Activated naive CD4-positive, alpha-beta T cell treated with anti-CD3 and anti-CD28 coated beads, Interleukin-2, amount 10 ng/mL, durations not matched to agents 7 days and 5 days (primary cell): ENCODE measurements at regions of chr14 and their contacts with region 1.

Region 1: GRCh38 chr14:91911474-91912032 is 35.9 kb downstream of the FBLN5 start:
- DNase-seq: peak; percentile 57
- H3K4me3 Mint-ChIP-seq: no peak overlapping the region
- H3K27ac Mint-ChIP-seq: no peak overlapping the region
- H3K4me1 Mint-ChIP-seq: peaks cover 15% of the 10 kb centered on the region
- H3K27me3 Mint-ChIP-seq: peaks cover 8% of the 10 kb centered on the region

Region 2: GRCh38 chr14:91649930-91650329 is 261.6 kb before region 1 on chr14:
- CTCF ChIA-PET with region 1: interaction called, 24 read pairs
- DNase-seq: peak; percentile 24
- H3K4me3 Mint-ChIP-seq: no peak overlapping the region
- H3K27ac Mint-ChIP-seq: no peak overlapping the region
- H3K4me1 Mint-ChIP-seq: peaks cover 15% of the 10 kb centered on the region
- H3K27me3 Mint-ChIP-seq: no peaks in the 10 kb centered on the region

Region 3: DNA sequence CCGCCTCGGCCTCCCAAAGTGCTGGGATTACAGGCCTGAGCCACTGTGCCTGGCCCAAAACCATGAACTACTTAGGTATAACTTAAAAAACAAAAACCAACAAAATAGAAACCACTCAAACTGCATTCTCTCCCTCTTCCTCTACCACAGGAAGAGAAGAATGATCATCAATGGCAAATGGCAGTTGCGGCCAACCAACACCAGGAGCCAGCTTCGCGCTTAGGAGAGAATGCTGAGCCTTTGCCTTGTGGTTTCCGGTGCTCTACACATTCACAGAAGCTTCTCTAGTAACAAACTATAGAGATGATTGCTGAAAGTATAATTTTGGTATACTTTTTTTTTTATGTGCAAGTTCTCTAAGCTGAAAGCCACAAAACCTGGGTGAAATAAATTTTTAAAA is 196.7 kb before region 1 on chr14:
- CTCF ChIA-PET with region 1: interaction called, 28 read pairs
- DNase-seq: peak; percentile 76
- H3K4me3 Mint-ChIP-seq: no peak overlapping the region
- H3K27ac Mint-ChIP-seq: peak overlapping the region; percentile 60
- H3K4me1 Mint-ChIP-seq: peaks cover 13% of the 10 kb centered on the region
- H3K27me3 Mint-ChIP-seq: no peaks in the 10 kb centered on the region

Region 4: DNA sequence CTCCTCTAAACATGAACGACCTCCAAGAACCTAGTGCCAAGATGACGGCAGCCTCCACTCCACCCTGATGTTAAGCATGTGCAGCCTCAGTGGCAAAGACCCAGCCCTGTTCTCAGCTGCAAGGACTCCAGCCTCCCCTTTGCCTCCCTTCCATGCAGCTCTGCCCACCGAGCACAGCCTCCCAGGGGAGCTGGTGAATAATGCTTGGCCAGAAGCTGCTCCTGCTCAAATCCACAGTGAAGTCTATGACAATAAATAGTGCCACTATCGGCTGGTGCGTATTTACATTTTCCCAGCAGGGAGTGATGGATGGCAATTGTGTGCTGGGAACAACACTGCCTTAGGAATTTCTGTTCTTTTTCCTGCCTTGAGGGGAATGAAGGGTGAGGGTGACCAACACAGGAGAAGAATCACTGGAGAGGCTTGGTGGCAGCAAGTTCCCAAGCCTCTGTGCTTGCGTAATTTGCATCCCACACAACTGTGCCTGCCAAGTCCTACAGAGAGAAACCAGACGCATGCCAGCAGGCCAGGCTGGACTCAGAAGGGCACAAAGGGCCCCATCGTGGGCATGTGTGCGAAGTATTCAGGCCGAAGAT is 14.3 kb before region 1 on chr14:
- CTCF ChIA-PET with region 1: interaction called, 14 read pairs
- DNase-seq: no peak
- H3K4me3 Mint-ChIP-seq: no peak overlapping the region
- H3K27ac Mint-ChIP-seq: no peak overlapping the region
- H3K4me1 Mint-ChIP-seq: peaks cover 30% of the 10 kb centered on the region
- H3K27me3 Mint-ChIP-seq: peaks cover 15% of the 10 kb centered on the region

Region 5: GRCh38 chr14:91942128-91942527 is 30.6 kb after region 1 on chr14:
- CTCF ChIA-PET with region 1: no interaction called
- DNase-seq: no peak
- H3K4me3 Mint-ChIP-seq: no peak overlapping the region
- H3K27ac Mint-ChIP-seq: no peak overlapping the region
- H3K4me1 Mint-ChIP-seq: peaks cover 16% of the 10 kb centered on the region
- H3K27me3 Mint-ChIP-seq: peaks cover 32% of the 10 kb centered on the region

Region 6: GRCh38 chr14:91968280-91968679 is 56.7 kb after region 1 on chr14:
- CTCF ChIA-PET with region 1: no interaction called
- DNase-seq: peak; percentile 34
- H3K4me3 Mint-ChIP-seq: no peak overlapping the region
- H3K27ac Mint-ChIP-seq: no peak overlapping the region
- H3K4me1 Mint-ChIP-seq: peaks cover 5% of the 10 kb centered on the region
- H3K27me3 Mint-ChIP-seq: no peaks in the 10 kb centered on the region

Region 7: DNA sequence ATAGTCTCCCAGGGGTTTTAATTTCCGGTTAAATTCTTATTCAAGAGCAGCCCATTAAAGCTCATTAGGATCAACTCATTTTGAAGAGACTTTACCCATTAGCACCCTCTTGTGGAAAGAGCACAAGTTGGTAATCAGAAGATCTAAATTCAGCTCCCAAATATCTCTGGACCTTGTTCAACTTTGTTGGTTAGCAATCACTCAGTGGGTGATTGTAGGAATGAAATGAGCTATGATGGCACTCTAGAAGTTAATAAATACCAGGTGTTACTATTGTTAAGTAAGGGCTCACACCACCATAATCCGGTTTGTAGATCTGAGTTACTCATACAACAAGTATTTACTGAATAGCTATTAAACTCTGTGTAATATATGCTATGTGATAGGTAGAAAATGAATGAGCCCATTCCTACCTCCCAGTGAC is 85.4 kb after region 1 on chr14:
- CTCF ChIA-PET with region 1: interaction called, 12 read pairs
- DNase-seq: no peak
- H3K4me3 Mint-ChIP-seq: no peak overlapping the region
- H3K27ac Mint-ChIP-seq: no peak overlapping the region
- H3K4me1 Mint-ChIP-seq: peaks cover 36% of the 10 kb centered on the region
- H3K27me3 Mint-ChIP-seq: no peaks in the 10 kb centered on the region

Region 8: DNA sequence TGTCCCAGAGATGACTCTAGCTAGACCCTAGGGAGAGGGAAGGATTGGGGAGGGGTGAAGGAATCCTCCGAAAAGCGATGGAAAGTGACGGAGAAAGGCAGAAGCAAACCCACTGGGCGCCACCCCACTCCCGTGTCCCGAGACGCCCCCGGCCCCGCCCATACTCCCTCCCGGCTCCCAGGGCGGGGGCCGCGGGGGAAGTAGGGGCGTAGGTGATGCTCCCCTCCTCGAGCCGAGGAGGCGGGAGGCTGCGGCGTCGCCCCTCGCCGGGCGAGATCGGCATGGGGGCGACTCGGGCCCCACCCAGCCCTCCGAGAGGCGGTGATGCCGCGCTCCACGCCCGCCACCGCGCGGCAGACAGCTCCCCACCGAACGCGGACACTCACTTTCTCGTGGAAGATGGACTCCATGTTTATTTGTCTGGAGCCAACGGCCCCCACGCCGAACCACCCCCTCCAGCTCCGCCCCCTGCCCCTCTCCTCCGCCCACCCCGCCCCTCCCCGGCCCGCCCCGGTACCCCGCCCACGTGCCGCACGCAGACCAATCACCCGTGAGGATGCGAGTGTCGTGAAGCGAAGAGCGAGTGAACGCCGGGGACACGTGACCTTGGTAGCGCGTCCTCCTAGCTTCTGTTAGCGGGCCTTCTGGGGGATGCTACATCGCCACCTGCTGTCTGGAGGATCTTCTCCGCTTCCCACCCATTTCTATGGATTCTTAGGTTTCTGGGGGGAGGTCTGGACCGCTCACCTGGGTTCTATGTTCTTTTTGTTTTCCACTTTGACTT is 194.8 kb after region 1 on chr14 and contains the start of gene ATXN3:
- CTCF ChIA-PET with region 1: no interaction called
- DNase-seq: peak; percentile 96
- H3K4me3 Mint-ChIP-seq: peak within 1 kb of the TSS; percentile 88
- H3K27ac Mint-ChIP-seq: peak within 1 kb of the TSS; percentile 88
- H3K4me1 Mint-ChIP-seq: peaks cover 39% of the 10 kb centered on the region
- H3K27me3 Mint-ChIP-seq: peaks cover 4% of the 10 kb centered on the region